Head of caudate nucleus (tissue), 42 donors: ENCODE measurements at regions of chr17 and their contacts with region 1.

Region 1: DNA sequence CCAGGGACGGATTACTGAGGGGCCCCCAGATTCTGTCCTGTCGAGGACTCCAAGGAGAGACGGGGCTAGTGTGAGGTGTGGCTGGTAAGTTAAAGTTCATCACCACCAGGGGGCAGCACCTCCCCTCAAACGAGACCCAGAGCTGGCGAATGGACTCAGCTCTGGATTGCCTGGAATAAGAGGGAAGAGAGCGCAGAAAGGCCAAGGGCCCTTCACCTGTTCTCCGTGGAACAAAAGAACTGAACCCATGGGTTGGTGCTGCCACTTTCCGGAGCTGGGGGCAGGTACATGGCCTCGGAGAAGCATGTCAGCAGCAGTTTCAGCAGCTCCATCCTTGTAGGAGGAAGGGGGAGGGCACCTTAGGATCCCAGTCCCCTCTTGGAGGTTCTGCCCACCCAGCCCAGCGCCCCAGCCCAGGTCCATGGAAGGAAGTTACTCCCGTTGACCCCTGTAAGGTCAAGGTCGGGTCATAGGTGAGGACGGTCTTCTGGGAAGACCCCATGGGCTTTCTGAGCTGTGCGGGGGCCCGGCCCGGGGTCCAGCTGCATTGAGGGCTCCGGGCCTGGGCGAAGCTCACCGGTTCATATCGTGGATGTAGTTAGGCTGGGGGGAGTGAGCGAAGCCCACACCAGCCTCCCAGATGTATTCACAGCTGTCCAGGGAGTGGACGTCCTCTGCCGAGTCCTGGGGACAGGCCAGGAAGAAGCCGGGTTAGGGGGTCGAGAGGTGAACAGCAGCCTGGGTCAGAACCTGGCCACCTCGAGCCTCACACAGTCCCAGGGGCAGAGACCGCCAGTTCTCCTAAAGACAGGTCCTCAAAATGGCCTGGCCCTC is 10.7 kb downstream of the HID1 start:
- DNase-seq: peak; percentile 77 to 98 (median 92)

Region 2: DNA sequence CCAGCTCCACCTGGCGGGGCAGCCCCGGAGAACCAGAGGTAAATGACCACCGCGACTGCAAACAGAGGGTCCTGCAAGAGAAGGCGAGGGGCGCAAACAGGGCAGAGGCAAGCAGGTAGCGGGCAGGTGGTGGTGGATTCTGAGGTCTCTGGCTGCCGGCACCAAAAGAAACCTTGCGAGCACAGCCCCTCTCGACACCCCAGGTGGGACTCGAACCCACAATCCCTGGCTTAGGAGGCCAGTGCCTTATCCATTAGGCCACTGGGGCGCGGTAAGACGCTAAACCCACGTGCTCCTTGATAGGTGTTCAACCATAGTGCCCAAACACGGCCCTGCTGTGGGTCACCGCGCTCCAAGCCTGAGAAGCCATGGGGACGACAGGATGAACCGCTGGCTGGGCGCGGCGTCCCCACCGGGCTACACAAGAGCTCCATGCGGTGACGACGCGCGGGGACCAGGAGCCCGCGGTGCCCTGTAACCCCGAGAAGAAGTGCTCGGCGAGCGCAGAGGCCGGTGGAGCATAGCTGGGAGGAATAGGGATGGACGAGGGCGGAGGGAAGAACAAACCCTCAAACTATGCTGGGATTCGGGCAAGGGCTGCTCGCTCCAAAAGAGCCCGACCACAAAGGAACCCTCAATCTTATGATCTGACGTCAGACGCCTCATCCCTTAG is 72.5 kb after region 1 on chr17:
- intact Hi-C with region 1: loop called (anchors 5 kb)
- DNase-seq: peak; percentile 70 to 97 (median 88)

Region 3: DNA sequence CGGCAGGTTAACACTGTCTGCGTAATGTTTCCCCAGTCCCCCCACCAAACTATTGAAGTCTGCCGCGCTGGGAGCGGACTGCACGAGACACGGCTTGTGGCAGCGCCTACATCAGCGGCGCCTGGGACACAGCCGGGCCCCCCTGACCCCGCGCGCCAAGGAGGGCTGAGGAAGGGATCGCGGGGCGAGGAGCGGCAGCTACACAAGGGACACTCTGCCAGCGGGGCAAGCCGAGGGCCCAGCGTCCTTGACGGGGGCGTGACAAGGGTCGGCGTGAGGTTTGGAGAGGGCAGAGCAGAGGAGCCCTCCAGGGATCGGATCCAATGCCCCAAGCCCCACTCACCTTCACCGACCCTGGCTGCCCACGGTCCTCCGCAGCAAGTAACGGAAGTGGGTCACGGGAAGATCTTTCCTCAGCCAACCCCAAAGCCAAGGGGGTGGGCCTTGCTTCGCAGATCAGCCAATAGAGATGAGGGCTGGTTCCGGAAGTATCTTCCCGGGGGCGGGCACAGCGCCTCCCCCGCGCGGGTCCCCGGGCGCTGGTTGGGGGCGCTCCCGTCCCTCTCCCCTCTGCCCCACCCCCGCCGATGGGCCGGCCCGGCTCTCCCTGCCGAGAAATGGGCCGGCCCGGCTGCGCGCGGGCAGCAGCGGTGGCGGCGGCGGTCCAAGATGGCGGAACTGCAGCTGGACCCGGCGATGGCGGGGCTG is 84.9 kb after region 1 on chr17 and contains the starts of genes ATP5PD and KCTD2:
- intact Hi-C with region 1: no loop called
- DNase-seq: peak; percentile 90 to 99 (median 96)